Activated T-helper 1 cell treated with anti-CD3 and anti-CD28 coated beads, Interleukin-12 subunit alpha, Interleukin-12 subunit beta, Interleukin-2, Interleukin-4 antibody, amounts not matched to agents 30 ng/mL and 10 ng/mL and 1 ng/mL, durations not matched to agents 14 hours and 24 hours and 36 hours (primary cell): ENCODE measurements at regions of chr2 and their contacts with region 1.

Region 1: DNA sequence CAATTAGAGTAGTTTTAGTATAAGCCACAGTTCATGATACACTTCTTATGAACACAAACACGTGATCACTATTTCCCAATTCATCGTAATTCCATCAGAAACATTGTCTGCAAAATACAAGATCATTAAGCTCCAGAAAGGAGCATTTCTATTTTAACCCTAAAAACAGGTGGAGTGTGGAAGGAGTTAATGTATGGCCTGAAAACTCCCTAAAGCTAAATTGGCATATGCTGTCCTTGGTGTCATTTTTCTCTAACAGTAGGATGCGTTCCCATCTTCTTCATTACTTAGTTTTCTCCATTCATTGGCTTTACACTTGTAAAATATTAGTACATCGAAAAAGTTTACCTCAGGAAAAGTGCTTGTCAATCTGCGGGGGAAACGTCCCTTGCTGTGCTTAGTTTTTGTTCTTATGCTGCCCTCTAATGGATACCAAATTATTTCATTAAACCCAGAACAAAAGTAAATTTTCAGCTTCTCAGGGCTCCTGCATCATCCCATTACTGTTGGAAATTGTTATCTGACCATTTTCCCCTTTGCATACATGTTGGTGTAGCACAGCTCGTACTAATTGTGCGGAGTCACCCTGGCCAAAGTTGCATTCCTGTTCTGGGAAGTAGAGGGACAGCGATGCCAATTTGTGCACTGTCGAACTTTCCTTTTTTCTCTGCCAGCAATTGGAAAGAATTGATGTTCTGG is 153.4 kb downstream of the GPD2 start:
- DNase-seq: no peak
- H3K4me3 Mint-ChIP-seq: no peak overlapping the region
- H3K27ac Mint-ChIP-seq: no peak overlapping the region
- H3K4me1 Mint-ChIP-seq: peaks cover 16% of the 10 kb centered on the region
- H3K27me3 Mint-ChIP-seq: no peaks in the 10 kb centered on the region

Region 2: DNA sequence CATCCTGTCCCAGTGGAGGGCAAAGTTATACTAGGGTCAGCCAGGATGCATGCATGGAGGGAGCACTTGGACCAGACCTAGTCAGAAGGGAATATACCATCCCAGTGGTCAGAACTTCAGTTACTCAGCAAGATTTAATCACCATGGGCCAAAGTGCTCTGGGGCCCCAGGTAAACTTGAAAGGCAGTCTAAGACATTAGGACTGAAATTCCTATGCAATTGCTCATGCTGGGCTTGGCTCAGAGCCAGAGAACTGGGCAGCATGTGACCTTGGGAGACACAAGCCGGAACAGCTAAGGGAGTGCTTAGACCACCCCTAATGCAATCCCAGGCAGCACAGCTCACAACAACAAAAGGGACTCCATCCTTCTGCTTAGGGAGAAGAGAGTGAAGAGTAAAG is 1489.7 kb before region 1 on chr2:
- intact Hi-C with region 1: no loop called
- DNase-seq: no peak
- H3K4me3 Mint-ChIP-seq: no peak overlapping the region
- H3K27ac Mint-ChIP-seq: no peak overlapping the region
- H3K4me1 Mint-ChIP-seq: no peaks in the 10 kb centered on the region
- H3K27me3 Mint-ChIP-seq: no peaks in the 10 kb centered on the region

Region 3: GRCh38 chr2:156065905-156066304 is 523.6 kb before region 1 on chr2:
- intact Hi-C with region 1: loop called (anchors 5 kb)
- DNase-seq: no peak
- H3K4me3 Mint-ChIP-seq: no peak overlapping the region
- H3K27ac Mint-ChIP-seq: no peak overlapping the region
- H3K4me1 Mint-ChIP-seq: no peaks in the 10 kb centered on the region
- H3K27me3 Mint-ChIP-seq: no peaks in the 10 kb centered on the region

Region 4: DNA sequence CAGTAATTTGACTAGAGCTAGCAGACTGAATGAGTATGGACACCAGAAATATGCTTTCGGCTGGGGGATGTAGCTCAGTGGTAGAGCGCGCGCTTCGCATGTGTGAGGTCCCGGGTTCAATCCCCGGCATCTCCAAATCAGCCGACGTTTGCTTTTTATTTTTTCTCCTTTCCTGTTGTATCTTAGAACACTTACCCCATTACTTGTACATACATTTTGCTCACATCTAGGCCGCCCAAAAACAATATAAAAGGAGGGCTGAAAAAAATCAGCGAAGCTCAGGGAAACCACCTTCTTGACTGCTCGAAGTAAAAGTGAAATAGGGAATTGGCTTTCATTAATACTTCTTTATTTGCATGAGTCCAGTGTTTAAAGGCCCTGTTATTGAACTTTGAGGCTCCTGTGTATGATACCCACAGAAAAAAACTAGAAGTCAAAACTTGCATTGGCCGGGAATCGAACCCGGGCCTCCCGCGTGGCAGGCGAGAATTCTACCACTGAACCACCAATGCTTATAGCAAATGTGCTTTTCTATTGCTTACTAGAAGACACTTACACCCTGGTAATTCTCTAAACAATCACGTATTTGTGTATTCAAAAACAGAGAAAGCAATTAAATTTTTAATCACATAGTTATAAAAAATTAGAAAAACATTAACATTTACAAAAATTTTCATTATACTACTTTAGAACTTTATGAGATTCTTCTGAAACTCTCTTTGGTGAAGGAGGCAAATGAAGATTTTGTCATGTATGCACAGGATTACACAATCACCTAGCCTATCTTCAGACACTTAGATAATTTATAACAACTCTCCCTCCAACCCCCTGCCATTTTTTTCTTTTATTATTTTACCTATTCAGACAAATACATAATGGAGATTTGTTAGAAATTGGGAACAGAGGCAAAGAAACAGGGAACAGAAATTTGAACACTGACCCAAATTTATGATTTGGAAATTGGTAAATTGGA is 188.5 kb before region 1 on chr2:
- intact Hi-C with region 1: loop called (anchors 1 kb)
- DNase-seq: peak; percentile 70
- H3K4me3 Mint-ChIP-seq: peak overlapping the region; percentile 95
- H3K27ac Mint-ChIP-seq: peak overlapping the region; percentile 91
- H3K4me1 Mint-ChIP-seq: peaks cover 37% of the 10 kb centered on the region
- H3K27me3 Mint-ChIP-seq: peaks cover 4% of the 10 kb centered on the region

Region 5: GRCh38 chr2:156476850-156477206 is 112.7 kb before region 1 on chr2:
- intact Hi-C with region 1: loop called (anchors 5 kb)
- DNase-seq: peak; percentile 11
- H3K4me3 Mint-ChIP-seq: peak overlapping the region; percentile 76
- H3K27ac Mint-ChIP-seq: peak overlapping the region; percentile 92
- H3K4me1 Mint-ChIP-seq: peaks cover 69% of the 10 kb centered on the region
- H3K27me3 Mint-ChIP-seq: no peaks in the 10 kb centered on the region

Region 6: GRCh38 chr2:157194097-157194688 is 604.7 kb after region 1 on chr2:
- intact Hi-C with region 1: loop called (anchors 5 kb)
- DNase-seq: no peak
- H3K4me3 Mint-ChIP-seq: no peak overlapping the region
- H3K27ac Mint-ChIP-seq: no peak overlapping the region
- H3K4me1 Mint-ChIP-seq: peaks cover 14% of the 10 kb centered on the region
- H3K27me3 Mint-ChIP-seq: peaks cover 21% of the 10 kb centered on the region